MCF 10A (cell line): ENCODE measurements at regions of chrX and their contacts with region 1.

Region 1: DNA sequence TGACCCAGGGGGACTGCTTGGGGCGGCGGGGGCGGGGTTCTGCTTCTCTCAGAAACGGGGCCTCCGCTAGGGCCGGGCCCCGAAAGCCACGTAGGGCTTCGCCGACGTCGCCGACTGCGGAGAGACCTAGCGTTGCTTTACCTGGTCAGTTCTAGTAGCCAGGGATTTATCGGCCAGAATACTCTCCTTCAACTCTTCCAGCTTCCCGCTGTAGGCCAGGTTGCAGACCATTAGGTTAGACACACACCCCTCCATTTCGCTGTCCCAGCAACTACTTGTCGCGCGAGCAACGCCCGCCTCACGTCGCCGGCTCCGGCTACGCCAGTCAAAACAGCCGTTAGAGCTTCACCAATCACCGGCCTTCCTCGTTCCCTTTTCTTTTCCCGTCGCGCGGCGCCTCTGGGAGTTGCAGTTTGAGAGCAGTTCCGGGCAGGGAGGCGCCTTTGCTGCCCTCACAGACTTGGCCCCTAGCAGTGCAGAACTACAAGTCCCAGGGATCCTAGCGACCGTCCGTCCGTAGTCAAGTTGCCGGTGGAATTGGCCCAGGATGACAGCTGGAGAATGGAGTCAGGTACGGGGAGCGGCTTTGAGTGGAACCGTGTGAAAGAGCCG is at the starts of genes ATG4A and PSMD10:
- DNase-seq: peak; percentile 96
- H3K4me3 Mint-ChIP-seq: no peak within 1 kb of the TSS
- H3K27ac Mint-ChIP-seq: no peak within 1 kb of the TSS
- H3K4me1 Mint-ChIP-seq: no peaks in the 10 kb centered on the region
- H3K27me3 Mint-ChIP-seq: peaks cover 44% of the 10 kb centered on the region
- CTCF ChIP-seq: no peak
- total RNA-seq, gene ATG4A: 7.3 and 11.7 TPM in 2 replicates
- total RNA-seq, gene PSMD10: 52.6 and 80.8 TPM in 2 replicates

Region 2: GRCh38 chrX:107627838-107628661 is 463.3 kb before region 1 on chrX and contains the start of gene PRPS1:
- CTCF ChIA-PET with region 1: no interaction called
- POLR2A ChIA-PET with region 1: interaction called, 10 read pairs
- intact Hi-C with region 1: no loop called
- DNase-seq: peak; percentile 93
- H3K4me3 Mint-ChIP-seq: peak within 1 kb of the TSS; percentile 79
- H3K27ac Mint-ChIP-seq: no peak within 1 kb of the TSS
- H3K4me1 Mint-ChIP-seq: no peaks in the 10 kb centered on the region
- H3K27me3 Mint-ChIP-seq: peaks cover 48% of the 10 kb centered on the region
- CTCF ChIP-seq: no peak
- total RNA-seq, gene PRPS1: 27.9 and 29.7 TPM in 2 replicates

Region 3: DNA sequence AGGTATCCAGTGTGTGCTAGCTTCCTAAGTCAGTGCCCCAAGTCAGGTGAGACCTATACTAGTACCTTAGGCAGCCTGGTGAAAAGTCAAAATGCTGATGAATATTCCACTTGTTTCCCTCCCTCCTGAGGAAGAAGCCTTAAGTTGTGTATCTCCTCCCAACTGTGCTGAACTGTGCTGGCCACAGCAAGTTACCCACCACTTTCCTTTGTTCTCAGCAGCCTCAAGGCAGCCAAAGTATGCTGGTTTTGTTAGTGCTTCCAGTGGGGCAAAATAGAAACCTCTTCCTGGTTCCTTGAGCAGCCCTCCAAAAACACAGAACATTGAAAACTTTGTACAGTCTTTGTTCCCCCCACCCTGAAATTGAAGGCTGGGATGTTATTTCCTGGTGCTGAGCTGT is 14.1 kb after region 1 on chrX:
- CTCF ChIA-PET with region 1: no interaction called
- POLR2A ChIA-PET with region 1: interaction called, 12 read pairs
- intact Hi-C with region 1: no loop called
- DNase-seq: no peak
- H3K4me3 Mint-ChIP-seq: no peak overlapping the region
- H3K27ac Mint-ChIP-seq: no peak overlapping the region
- H3K4me1 Mint-ChIP-seq: no peaks in the 10 kb centered on the region
- H3K27me3 Mint-ChIP-seq: peaks cover 88% of the 10 kb centered on the region
- CTCF ChIP-seq: no peak

Region 4: GRCh38 chrX:108122748-108123147 is 31.4 kb after region 1 on chrX:
- CTCF ChIA-PET with region 1: interaction called, 4 read pairs
- POLR2A ChIA-PET with region 1: interaction called, 61 read pairs
- intact Hi-C with region 1: no loop called
- DNase-seq: peak; percentile 70
- H3K4me3 Mint-ChIP-seq: no peak overlapping the region
- H3K27ac Mint-ChIP-seq: peak overlapping the region; percentile 92
- H3K4me1 Mint-ChIP-seq: peaks cover 17% of the 10 kb centered on the region
- H3K27me3 Mint-ChIP-seq: peaks cover 90% of the 10 kb centered on the region
- CTCF ChIP-seq: no peak